ENCODE measurements at regions of chr5 and their contacts with region 1.

Region 1: DNA sequence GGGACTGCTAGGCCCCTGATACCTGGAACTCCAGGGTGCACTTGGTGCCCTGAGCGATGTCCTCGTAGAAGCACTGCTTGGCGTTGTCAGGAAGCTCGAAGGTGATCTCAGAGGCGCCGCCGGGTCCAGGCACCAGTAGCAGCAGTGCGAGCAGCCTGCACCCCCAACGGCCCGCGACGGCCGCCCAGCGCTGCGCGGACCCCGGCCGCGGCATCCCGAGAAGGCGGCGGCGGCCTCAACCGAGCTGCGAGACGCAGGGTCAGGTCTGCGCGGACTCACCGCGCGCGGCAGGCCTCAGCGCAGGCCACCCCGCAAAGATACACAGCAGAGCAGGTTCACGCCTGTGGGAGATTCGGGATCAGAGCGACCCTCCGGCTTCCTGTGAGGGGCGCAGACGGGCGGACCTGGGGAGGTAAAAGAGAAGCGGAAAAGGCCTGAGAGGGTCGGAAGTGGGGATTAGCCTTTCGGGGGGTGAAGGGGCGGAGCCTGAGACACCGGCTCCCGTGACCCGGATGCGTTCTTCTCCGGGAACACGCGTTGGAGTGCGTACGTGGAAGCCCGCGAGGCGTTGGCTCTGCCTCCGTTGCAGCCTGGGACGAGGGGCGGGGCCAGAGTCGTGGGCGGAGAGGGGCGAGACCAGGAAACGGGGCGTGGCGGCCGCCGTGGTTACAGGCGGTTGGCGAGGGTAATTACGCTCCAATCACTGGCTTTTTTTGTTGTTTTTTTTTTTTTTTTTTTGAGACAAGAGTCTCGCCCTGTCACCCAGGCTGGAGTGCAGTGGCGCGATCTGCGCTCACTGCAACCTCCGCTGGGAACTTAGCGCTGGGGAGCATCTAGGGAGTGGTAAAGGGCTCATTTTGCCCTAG is at the start of gene TMED7:
- DNase-seq: peak; percentile 99
- ATAC-seq: peak; percentile 93
- H3K4me3 Mint-ChIP-seq: no peak within 1 kb of the TSS
- H3K27ac Mint-ChIP-seq: no peak within 1 kb of the TSS
- H3K4me1 Mint-ChIP-seq: peaks cover 27% of the 10 kb centered on the region
- H3K27me3 Mint-ChIP-seq: peaks cover 4% of the 10 kb centered on the region
- total RNA-seq, gene TMED7: 40.5 to 48.9 TPM

Region 2: DNA sequence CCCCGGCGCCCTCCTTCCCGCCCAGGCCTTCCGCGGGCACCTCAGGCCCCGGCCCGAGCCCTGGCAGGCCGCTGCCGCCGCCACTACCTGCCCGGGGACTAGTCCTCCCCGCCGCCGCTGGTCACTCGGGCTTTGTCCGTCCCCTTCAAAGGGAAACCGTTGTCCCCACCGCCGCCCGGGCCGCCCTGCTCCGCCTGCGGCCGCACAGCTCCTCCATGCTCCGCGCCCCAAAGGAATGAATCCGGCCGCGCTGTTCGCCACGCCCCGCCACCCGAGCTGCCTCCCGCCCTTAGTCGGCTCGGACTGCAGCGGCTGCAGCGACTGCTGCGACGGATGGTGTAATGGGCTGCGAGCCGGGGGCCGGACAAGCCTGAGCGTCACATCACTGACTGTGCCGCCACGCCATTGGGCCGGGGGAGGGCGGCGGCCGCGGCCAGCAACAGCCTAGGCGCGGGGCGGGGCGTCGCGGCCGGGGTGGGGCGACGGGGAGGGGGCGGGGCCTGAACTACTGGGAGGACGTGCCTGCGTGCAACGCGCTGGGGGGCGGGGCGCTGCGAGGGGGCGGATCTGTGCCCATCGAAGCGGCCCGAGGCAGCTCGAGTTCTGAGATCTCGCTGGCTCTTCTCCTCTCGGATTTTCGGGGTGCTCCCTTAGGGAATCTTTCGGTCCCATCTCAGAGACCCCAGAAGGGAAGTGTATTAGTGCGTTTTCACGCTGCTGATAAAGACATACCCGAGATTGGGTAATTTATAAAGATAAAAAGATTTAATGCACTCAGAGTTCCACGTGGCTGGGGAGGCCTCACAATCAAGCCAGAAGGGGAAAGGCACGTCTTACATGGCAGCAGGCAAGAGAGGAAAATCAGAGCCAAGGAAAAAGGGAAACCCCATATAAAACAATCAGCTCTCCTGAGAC is 81.1 kb before region 1 on chr5 and contains the start of gene FEM1C:
- CTCF ChIA-PET with region 1: interaction called, 3 read pairs
- POLR2A ChIA-PET with region 1: interaction called, 33 read pairs
- DNase-seq: peak; percentile 97
- ATAC-seq: peak; percentile 95
- H3K4me3 Mint-ChIP-seq: peak within 1 kb of the TSS; percentile 99
- H3K27ac Mint-ChIP-seq: peak within 1 kb of the TSS; percentile 99
- H3K4me1 Mint-ChIP-seq: peaks cover 42% of the 10 kb centered on the region
- H3K27me3 Mint-ChIP-seq: no peaks in the 10 kb centered on the region
- total RNA-seq, gene FEM1C: 13.6 to 15.0 TPM

Region 3: GRCh38 chr5:115641948-115642347 is 16.1 kb after region 1 on chr5:
- CTCF ChIA-PET with region 1: no interaction called
- POLR2A ChIA-PET with region 1: no interaction called
- DNase-seq: no peak
- ATAC-seq: no peak
- H3K4me3 Mint-ChIP-seq: no peak overlapping the region
- H3K27ac Mint-ChIP-seq: no peak overlapping the region
- H3K4me1 Mint-ChIP-seq: peaks cover 18% of the 10 kb centered on the region
- H3K27me3 Mint-ChIP-seq: peaks cover 49% of the 10 kb centered on the region

Region 4: GRCh38 chr5:115673596-115673995 is 47.8 kb after region 1 on chr5:
- CTCF ChIA-PET with region 1: no interaction called
- POLR2A ChIA-PET with region 1: no interaction called
- DNase-seq: no peak
- ATAC-seq: no peak
- H3K4me3 Mint-ChIP-seq: no peak overlapping the region
- H3K27ac Mint-ChIP-seq: no peak overlapping the region
- H3K4me1 Mint-ChIP-seq: no peaks in the 10 kb centered on the region
- H3K27me3 Mint-ChIP-seq: peaks cover 17% of the 10 kb centered on the region

Region 5: DNA sequence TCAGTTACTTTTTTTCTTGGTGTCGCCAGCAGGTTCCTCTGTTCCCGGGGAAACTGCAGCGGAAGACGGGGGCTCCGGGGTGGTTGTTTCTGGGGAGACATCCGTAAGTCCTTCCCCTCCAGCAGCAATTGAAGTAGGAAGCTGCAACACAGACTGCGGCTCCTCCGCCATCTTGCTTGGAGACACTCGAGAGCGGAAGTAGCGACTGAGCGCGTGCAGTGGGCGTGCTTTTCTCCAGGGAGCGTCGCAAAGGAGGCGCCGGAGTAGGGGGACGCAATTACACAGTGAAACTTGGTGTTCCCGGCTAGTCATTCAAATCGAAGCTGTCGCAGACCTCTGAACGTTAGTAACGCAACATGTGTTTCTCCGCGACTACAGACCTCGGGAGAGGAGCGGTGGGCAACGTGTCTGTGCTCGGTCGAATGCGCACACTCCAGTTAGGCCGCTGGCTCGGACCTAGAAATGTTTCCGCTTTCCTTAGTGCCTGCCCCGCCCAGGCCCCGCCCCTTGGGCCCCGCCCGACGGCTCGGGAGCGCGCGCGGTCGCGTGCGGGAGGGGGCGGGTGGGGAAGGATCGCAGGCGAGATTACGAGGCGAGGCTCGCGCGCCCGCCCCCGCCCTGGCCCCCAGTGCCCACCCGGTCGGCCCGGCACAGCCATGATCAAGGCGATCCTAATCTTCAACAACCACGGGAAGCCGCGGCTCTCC is 215.7 kb after region 1 on chr5 and contains the starts of genes AP3S1 and ATG12:
- CTCF ChIA-PET with region 1: interaction called, 20 read pairs
- POLR2A ChIA-PET with region 1: interaction called, 4 read pairs
- DNase-seq: peak; percentile 94
- ATAC-seq: peak; percentile 89
- H3K4me3 Mint-ChIP-seq: peak within 1 kb of the TSS; percentile 98
- H3K27ac Mint-ChIP-seq: peak within 1 kb of the TSS; percentile 100
- H3K4me1 Mint-ChIP-seq: peaks cover 55% of the 10 kb centered on the region
- H3K27me3 Mint-ChIP-seq: no peaks in the 10 kb centered on the region
- total RNA-seq, gene AP3S1: 76.6 to 78.3 TPM
- total RNA-seq, gene ATG12: 35.9 to 43.9 TPM